Heart left ventricle (tissue), 16 donors: ENCODE measurements at regions of chr12 and their contacts with region 1.

Region 1: DNA sequence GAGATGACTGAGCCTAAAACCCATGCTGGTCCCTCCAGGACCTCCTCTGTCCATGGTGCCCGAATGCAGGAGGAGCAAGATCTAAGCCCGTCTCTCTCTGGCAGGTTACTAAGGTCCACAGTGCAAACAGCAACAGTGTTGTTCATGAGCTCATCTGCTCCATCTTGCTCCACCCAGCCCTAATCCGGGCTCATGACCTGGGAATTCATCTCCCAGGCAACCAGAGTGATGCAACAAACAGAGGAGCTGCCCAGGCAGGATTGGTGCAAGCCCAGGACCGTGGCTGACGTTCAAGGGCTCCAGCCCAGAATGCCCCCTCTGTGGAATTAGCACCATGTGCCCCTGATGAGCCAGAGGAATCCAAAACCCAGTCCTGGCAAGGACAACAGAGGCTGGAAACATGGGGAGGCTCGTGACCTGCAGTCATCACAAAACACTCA is 29.9 kb downstream of the HSPB8 start:
- DNase-seq: peak; percentile 81 to 94 (median 87)
- ATAC-seq: peak; percentile 94 to 95 (median 94)
- H3K4me3 ChIP-seq: no peak overlapping the region
- H3K27ac ChIP-seq: peak overlapping the region in 11 of 12 donors; percentile 1 to 78 (median 66)
- H3K4me1 ChIP-seq: peaks cover 0 to 45% (median 32%) of the 10 kb centered on the region in 12 donors
- H3K27me3 ChIP-seq: no peaks in the 10 kb centered on the region
- CTCF ChIP-seq: no peak
- POLR2A ChIP-seq: no peak

Region 2: GRCh38 chr12:118830296-118830695 is 378.3 kb before region 1 on chr12:
- intact Hi-C with region 1: no loop called
- DNase-seq: no peak
- ATAC-seq: no peak
- H3K4me3 ChIP-seq: no peak overlapping the region
- H3K27ac ChIP-seq: no peak overlapping the region
- H3K4me1 ChIP-seq: no peaks in the 10 kb centered on the region
- H3K27me3 ChIP-seq: no peaks in the 10 kb centered on the region
- CTCF ChIP-seq: no peak
- POLR2A ChIP-seq: no peak

Region 3: DNA sequence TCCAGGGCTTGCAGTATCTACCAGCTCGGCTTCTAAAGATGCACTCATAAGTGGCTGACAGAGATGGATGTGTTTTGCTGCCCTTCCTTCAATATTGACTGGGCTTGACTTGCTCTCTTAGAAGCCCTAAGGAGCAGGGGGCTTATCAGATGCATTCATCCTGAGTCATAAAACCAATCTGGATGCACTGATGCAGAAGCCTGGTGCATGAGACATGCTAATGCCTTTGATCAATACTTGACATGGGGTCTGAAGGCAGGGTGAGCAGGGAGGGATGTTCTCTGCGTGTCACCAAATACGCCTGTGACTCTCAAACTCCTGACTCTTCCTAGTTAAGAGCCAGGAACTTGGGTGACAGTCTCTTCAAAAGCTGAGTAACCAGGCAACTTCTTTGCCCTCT is 107.7 kb before region 1 on chr12:
- intact Hi-C with region 1: no loop called
- DNase-seq: no peak
- ATAC-seq: no peak
- H3K4me3 ChIP-seq: no peak overlapping the region
- H3K27ac ChIP-seq: no peak overlapping the region
- H3K4me1 ChIP-seq: no peaks in the 10 kb centered on the region
- H3K27me3 ChIP-seq: peaks cover 0 to 15% (median 0%) of the 10 kb centered on the region in 9 donors
- CTCF ChIP-seq: no peak
- POLR2A ChIP-seq: no peak

Region 4: DNA sequence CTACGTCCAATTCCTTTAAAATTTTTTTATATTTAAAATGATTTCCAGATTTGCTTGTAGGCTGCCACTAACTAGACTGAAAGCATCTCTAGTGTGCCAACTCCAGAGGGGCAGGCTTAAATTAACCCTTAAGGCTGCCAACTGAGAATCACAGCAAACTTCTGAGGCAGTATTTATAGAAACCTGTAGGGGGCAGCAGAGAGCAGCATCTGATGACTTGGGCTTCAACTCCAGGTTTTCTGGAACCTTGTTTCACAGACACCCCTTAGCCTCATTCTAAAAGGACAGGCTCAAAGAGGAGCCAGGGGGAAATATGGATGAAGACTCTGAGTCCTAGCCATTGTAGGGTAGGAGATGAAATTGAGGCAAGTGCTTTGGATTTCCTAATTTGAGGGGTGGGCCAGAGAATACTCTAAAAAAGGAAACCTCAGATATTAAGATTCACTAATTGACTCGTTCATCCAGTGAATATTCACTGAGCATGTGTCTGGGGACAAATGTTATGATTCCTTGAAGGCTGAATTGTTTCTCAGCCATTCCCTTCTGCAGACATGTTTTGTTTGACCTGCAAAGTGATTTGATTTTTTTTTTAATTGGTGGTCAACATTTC is 93.2 kb before region 1 on chr12:
- intact Hi-C with region 1: loop called in 1 of 10 experiments (anchors 10 kb)
- DNase-seq: peak in 2 of 5 donors; percentile 35
- ATAC-seq: peak in 3 of 4 donors; percentile 31 to 57 (median 37)
- H3K4me3 ChIP-seq: no peak overlapping the region
- H3K27ac ChIP-seq: no peak overlapping the region
- H3K4me1 ChIP-seq: peaks cover 0 to 3% (median 0%) of the 10 kb centered on the region in 12 donors
- H3K27me3 ChIP-seq: peaks cover 0 to 4% (median 0%) of the 10 kb centered on the region in 9 donors
- CTCF ChIP-seq: peak; percentile 82 to 97 (median 93)
- POLR2A ChIP-seq: no peak

Region 5: DNA sequence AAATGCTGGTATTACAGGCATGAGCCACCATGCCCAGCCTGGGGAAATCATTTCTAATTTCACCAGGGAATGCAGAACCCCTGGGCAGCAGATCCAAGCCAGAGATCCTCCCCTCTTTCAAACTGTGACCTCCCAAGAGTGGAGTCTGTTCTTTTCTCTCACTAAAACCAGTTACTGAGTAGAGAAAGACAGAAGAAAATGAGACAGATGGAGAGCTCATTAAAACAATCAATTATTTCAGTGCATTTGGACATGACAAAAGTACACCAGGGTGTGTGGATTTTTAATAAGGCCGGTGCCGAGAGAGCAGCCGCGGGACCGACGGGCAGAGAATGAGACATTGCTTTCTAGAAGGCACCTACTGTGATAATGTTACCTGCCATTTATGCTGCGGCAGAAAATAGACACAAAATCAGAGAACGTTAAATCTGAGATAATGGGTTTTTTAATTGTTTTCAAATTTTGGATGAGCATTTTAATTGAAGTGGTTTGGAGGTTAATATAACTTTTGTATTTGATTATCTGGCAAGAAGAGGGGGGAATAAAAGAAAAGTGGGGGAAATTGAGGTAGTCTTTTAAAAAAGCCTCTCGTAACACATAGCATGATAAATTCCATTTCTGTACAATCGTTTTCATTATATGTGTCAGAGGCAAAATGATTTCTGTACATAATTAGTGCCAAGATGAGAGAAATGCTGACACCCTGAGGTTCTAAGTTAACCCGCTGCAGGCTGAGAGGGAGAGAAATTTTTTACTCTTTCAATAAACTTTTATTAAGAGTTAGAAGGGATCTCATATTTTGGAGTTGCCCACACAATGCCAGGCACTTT is 40.9 kb after region 1 on chr12:
- intact Hi-C with region 1: loop called in 2 of 10 experiments (anchors 2 kb)
- DNase-seq: no peak
- ATAC-seq: no peak
- H3K4me3 ChIP-seq: no peak overlapping the region
- H3K27ac ChIP-seq: peak overlapping the region in 8 of 12 donors; percentile 16 to 62 (median 40)
- H3K4me1 ChIP-seq: peaks cover 0 to 31% (median 13%) of the 10 kb centered on the region in 12 donors
- H3K27me3 ChIP-seq: no peaks in the 10 kb centered on the region
- CTCF ChIP-seq: no peak
- POLR2A ChIP-seq: no peak

Region 6: DNA sequence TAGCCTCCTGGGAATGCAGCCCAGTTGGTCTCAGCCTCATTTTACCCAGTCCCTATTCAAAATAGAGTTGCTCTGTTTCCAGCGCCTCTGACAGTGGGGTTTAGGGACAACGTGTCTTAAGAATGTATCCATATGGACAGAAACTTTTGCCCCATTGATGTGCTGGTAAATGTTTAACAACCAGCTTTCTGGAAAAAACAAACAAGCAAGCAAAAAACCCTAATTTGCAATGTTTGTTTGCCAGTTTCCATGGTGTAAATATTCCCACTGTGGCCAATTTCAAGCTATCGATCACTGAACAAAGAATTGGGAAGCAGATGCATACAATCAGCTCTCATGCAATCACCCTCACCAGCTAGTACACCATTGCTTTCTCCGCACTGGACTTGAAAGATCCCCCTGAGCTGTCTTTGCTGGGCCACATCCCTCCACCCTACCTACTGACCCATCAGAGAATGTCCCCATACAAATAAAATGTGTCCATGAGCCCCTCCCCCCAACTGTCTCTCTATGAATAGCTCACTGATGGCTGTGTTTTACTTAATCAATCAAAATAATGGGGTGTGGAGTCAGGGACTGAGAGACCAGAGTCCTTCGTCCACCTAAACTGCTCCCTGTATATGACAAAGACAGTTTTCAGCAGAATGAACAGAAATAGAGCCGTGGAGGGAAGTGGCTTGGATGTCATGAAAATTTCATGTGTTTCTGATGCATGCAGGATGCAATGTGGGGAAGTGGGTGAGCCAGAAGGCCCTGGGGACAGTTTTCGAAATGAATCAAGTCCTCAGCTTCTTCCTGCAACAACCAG is 166.6 kb after region 1 on chr12:
- intact Hi-C with region 1: loop called in 2 of 10 experiments (anchors 5 to 10 kb)
- DNase-seq: peak in 1 of 5 donors; percentile 26
- ATAC-seq: peak in 1 of 4 donors; percentile 2
- H3K4me3 ChIP-seq: no peak overlapping the region
- H3K27ac ChIP-seq: peak overlapping the region in 10 of 12 donors; percentile 2 to 81 (median 48)
- H3K4me1 ChIP-seq: peaks cover 0 to 50% (median 18%) of the 10 kb centered on the region in 12 donors
- H3K27me3 ChIP-seq: no peaks in the 10 kb centered on the region
- CTCF ChIP-seq: no peak
- POLR2A ChIP-seq: no peak

Region 7: DNA sequence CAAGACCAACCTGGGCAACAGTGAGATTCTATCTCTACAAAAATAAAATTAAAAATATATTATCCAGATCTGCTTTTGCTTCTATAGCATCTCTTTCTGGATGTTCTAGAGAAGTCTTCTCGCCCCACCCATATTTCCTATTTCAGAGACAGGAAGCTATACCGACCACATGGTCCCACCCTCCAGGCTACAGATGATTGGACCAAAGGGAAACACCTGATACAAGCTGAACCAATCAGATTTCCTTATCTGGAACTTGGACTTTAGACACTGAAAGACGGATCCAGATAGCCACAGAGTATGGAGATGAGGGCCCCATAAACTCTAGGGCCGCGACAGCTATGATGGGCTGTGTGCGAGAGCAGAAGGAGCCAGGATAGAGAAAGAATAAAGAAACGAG is 174.6 kb after region 1 on chr12:
- intact Hi-C with region 1: loop called in 2 of 10 experiments (anchors 5 to 10 kb)
- DNase-seq: no peak
- ATAC-seq: no peak
- H3K4me3 ChIP-seq: no peak overlapping the region
- H3K27ac ChIP-seq: no peak overlapping the region
- H3K4me1 ChIP-seq: peaks cover 0 to 32% (median 6%) of the 10 kb centered on the region in 12 donors
- H3K27me3 ChIP-seq: no peaks in the 10 kb centered on the region
- CTCF ChIP-seq: no peak
- POLR2A ChIP-seq: no peak

Region 8: GRCh38 chr12:119412811-119413794 is 204.5 kb after region 1 on chr12:
- intact Hi-C with region 1: loop called in 1 of 10 experiments (anchors 10 kb)
- DNase-seq: peak in 4 of 5 donors; percentile 53 to 67 (median 58)
- ATAC-seq: peak in 3 of 4 donors; percentile 42 to 73 (median 58)
- H3K4me3 ChIP-seq: no peak overlapping the region
- H3K27ac ChIP-seq: no peak overlapping the region
- H3K4me1 ChIP-seq: peaks cover 0 to 6% (median 0%) of the 10 kb centered on the region in 12 donors
- H3K27me3 ChIP-seq: no peaks in the 10 kb centered on the region
- CTCF ChIP-seq: peak; percentile 82 to 93 (median 90)
- POLR2A ChIP-seq: no peak